ENCODE measurements at regions of chr18 and their contacts with region 1.

Region 1: GRCh38 chr18:46281185-46282176 is 177.3 kb downstream of the HAUS1 start:
- DNase-seq: peak; percentile 51 to 81
- ATAC-seq: peak; percentile 84 to 92 (median 84)
- H3K4me3 ChIP-seq: no peak overlapping the region
- H3K27ac ChIP-seq: no peak overlapping the region
- H3K4me1 ChIP-seq: peaks cover 23% of the 10 kb centered on the region
- H3K27me3 ChIP-seq: no peaks in the 10 kb centered on the region
- CTCF ChIP-seq: peak; percentile 96

Region 2: DNA sequence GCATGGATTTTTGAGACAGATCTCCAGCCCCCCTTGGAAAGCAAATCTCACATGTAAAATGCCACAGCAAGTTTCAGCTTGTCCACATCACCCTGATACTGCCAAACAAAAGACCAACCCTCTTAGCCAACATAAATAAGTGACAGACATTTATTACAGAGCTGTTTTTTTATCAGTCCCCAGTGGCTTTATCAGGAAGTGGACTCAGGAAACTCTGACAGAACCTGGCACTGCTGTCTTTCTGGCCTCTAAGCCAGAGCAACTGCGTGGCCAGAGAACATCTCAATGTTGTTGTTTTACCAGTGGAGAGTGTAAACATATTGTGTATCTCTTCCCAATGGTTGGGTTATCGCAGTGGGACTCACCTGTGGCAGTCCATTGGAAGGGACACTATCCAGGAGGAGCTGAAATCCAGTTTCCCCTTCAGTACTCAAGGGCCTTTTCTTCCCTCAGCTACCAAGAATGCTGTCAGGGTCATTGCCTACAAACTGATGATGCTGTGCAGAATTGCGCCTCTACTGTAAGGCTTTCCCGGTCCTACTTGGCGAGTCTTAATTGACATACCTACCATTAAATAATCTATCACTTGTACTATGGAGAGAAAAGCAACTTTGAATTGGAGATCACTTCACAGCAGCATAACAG is 535.5 kb before region 1 on chr18:
- intact Hi-C with region 1: no loop called
- DNase-seq: no peak
- ATAC-seq: peak in 1 of 4 donors; percentile 30
- H3K4me3 ChIP-seq: no peak overlapping the region
- H3K27ac ChIP-seq: no peak overlapping the region
- H3K4me1 ChIP-seq: no peaks in the 10 kb centered on the region
- H3K27me3 ChIP-seq: peaks cover 0 to 3% (median 0%) of the 10 kb centered on the region in 3 donors
- CTCF ChIP-seq: no peak

Region 3: DNA sequence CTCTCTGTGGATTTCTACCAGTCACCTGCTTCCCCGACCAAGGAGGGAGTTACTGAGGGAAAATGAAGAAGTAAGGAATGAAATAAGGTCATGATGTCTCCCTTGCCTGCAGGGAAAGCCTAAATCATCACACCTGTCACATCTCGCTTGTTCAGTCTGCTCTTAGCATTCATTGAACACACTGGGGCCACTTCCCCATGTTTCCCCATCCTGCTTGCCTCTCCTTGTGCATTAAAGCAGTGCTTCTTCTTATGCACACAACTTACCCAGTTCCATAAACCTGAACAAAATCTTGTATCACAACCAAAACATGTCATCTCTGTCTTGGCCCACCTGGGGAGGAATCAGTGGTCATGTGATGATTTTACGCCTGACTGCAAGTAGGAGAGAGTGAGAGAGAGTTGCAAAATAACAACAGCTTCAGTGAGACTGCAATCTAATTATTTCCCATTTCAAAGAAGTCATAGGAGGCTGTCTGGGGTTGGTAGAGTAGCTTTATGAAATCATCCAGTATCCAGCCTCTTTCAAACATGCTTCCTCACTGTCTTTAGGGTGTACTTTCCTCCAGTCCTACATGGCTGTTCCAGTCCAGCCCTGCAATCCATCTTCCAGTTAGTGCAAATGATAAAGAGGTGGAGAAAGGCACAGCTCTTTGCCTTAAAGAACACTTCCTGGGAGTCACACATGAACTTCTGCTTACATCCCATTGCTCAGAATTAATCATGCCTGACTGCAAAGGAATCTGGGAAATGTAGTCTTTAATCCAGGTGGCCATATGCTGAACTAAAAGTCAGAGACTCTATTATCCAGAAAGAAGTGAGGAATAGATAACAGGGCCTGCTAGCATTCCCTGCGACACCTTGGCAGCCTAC is 42.8 kb after region 1 on chr18:
- intact Hi-C with region 1: no loop called
- DNase-seq: no peak
- ATAC-seq: peak; percentile 34 to 66 (median 51)
- H3K4me3 ChIP-seq: no peak overlapping the region
- H3K27ac ChIP-seq: no peak overlapping the region
- H3K4me1 ChIP-seq: peaks cover 17% of the 10 kb centered on the region
- H3K27me3 ChIP-seq: no peaks in the 10 kb centered on the region
- CTCF ChIP-seq: no peak

Region 4: DNA sequence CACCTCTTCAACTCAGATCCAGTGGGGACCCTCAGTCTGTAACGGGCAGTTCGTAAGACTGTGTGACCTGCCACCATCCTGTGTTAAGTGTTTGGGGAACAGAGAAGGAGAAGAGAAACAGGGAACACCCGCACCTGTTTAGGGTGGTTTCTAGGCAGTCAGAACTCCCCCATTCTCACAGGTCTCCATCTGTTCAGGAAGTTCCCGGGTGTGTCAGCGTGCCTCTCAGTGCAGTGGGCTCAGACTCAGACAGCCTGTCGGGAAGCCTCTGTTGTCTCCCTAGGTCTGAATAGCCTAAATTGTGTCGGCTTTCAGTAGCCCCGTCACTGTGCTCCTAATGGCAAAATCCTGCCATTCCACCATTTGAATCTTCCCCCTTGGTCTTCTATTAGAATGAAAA is 119.0 kb after region 1 on chr18:
- intact Hi-C with region 1: no loop called
- DNase-seq: no peak
- ATAC-seq: no peak
- H3K4me3 ChIP-seq: no peak overlapping the region
- H3K27ac ChIP-seq: no peak overlapping the region
- H3K4me1 ChIP-seq: peaks cover 5% of the 10 kb centered on the region
- H3K27me3 ChIP-seq: no peaks in the 10 kb centered on the region
- CTCF ChIP-seq: no peak

Region 5: GRCh38 chr18:46411867-46412690 is 130.6 kb after region 1 on chr18:
- intact Hi-C with region 1: loop called in 1 of 2 experiments (anchors 5 kb)
- DNase-seq: peak; percentile 58 to 81
- ATAC-seq: peak; percentile 84 to 91 (median 86)
- H3K4me3 ChIP-seq: peak overlapping the region; percentile 8
- H3K27ac ChIP-seq: peak overlapping the region; percentile 91
- H3K4me1 ChIP-seq: peaks cover 75% of the 10 kb centered on the region
- H3K27me3 ChIP-seq: no peaks in the 10 kb centered on the region
- CTCF ChIP-seq: no peak

Region 6: DNA sequence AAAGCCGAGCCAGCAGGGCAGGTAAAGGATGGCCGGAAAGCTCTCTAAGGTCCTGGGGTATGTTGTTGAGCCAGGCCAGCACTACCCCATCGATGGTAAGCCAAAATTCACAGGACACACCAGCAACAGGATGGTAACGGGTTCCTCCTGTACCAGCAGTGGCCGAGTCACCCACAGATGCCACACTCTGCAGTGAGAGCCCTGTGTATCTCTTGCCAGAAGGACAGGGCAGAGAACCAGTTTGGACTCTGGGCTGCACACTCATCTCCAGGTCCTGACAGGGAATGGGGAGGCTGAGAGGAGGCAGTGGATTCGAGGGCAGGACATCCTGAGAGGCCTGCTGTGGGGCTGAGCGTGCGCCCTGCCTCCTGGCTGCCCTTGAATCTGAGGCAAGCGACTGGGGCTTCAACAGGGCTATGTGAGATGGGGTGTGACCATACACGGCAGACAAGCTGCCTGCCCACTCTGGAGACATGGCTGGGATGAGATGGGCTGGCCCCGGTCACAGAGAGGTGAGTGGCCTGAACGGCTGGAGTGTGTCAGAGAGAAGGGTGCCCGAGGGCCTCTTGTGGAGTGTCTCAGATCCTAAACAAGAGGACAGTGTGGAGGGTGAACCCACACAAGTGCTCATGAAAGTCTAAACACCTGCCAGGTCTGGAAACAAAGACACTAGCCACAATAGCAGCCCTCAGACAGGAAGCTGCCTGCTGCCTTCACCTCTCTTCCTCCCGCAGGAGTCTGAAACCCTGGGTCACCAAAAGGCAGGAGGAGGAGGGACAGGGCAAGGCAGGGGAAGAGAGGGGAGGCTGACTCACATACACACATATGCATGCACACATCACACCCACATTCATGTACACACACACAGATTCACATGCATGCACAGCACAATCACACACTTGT is 193.3 kb after region 1 on chr18:
- intact Hi-C with region 1: loop called in 1 of 2 experiments (anchors 10 kb)
- DNase-seq: no peak
- ATAC-seq: peak in 3 of 4 donors; percentile 36 to 45 (median 44)
- H3K4me3 ChIP-seq: no peak overlapping the region
- H3K27ac ChIP-seq: no peak overlapping the region
- H3K4me1 ChIP-seq: peaks cover 13% of the 10 kb centered on the region
- H3K27me3 ChIP-seq: no peaks in the 10 kb centered on the region
- CTCF ChIP-seq: no peak

Region 7: DNA sequence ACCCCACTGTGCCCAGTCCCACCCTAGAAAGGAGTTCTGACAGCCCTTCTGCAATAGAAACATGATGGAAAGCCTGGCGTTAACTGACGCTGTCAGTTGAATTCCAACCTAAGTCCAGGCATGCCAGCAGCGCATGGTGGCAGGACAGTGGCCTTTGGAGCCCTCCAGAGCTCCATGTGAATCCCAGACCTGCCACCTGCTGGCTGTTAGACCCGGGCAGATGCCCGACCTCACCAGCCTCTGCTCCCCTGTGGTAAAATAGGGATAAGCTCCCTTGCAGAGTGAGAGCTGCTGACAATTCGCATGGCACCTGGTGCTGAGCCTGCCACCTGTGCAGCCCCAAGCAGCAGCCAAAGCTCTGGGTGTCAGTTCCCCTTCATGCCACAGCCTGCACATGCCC is 237.0 kb after region 1 on chr18:
- intact Hi-C with region 1: loop called (anchors 1 to 5 kb)
- DNase-seq: peak in 1 of 2 donors; percentile 65
- ATAC-seq: peak; percentile 93 to 97 (median 95)
- H3K4me3 ChIP-seq: no peak overlapping the region
- H3K27ac ChIP-seq: no peak overlapping the region
- H3K4me1 ChIP-seq: no peaks in the 10 kb centered on the region
- H3K27me3 ChIP-seq: no peaks in the 10 kb centered on the region
- CTCF ChIP-seq: peak; percentile 61

Region 8: GRCh38 chr18:46660955-46661749 is 379.7 kb after region 1 on chr18:
- intact Hi-C with region 1: loop called in 1 of 2 experiments (anchors 5 kb)
- DNase-seq: no peak
- ATAC-seq: peak; percentile 59 to 84 (median 80)
- H3K4me3 ChIP-seq: no peak overlapping the region
- H3K27ac ChIP-seq: no peak overlapping the region
- H3K4me1 ChIP-seq: no peaks in the 10 kb centered on the region
- H3K27me3 ChIP-seq: no peaks in the 10 kb centered on the region
- CTCF ChIP-seq: no peak